Activated CD4-positive, alpha-beta T cell treated with anti-CD3 and anti-CD28 coated beads for 36 hours (primary cell): ENCODE measurements at regions of chr1 and their contacts with region 1.

Region 1: DNA sequence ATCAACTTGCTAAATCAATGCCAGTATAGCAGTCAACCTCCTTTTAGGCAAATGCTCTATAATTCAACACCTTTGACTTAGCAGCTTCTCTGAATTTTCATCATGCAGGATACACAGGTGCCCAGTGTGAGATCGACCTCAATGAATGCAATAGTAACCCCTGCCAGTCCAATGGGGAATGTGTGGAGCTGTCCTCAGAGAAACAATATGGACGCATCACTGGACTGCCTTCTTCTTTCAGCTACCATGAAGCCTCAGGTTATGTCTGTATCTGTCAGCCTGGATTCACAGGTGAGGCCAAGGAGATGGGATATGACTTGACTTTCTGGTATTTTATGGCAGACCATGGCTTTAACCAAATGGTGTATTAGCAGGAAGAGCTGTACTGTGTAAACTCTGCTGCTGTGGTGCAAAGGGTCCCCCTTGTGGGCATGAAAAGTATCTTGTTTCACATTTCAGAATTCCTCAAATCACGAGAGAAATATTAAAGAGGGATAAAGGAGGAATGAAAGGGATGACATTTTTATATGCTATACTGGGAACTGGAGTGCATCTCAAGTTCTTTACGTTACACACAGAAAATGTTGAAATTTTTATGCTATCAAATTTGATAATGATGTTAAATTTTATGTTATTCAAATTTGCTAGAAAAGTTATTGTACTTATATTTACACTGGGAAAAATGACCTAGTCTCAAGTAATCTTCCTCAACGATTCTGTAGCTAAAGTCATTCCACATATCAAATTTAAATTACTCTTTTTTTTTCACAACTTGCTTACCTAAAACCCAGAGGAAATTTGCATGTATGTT is 88.9 kb downstream of the CRB1 start:
- DNase-seq: peak; percentile 45
- ATAC-seq: peak; percentile 64
- H3K4me3 Mint-ChIP-seq: no peak overlapping the region
- H3K27ac Mint-ChIP-seq: no peak overlapping the region
- H3K4me1 Mint-ChIP-seq: no peaks in the 10 kb centered on the region
- H3K27me3 Mint-ChIP-seq: no peaks in the 10 kb centered on the region

Region 2: GRCh38 chr1:196723322-196724185 is 633.4 kb before region 1 on chr1:
- CTCF ChIA-PET with region 1: no interaction called
- POLR2A ChIA-PET with region 1: no interaction called
- intact Hi-C with region 1: loop called in 1 of 2 experiments (anchors 1 kb)
- DNase-seq: peak; percentile 70
- ATAC-seq: peak; percentile 83
- H3K4me3 Mint-ChIP-seq: no peak overlapping the region
- H3K27ac Mint-ChIP-seq: no peak overlapping the region
- H3K4me1 Mint-ChIP-seq: no peaks in the 10 kb centered on the region
- H3K27me3 Mint-ChIP-seq: no peaks in the 10 kb centered on the region

Region 3: GRCh38 chr1:196738730-196739129 is 618.2 kb before region 1 on chr1:
- CTCF ChIA-PET with region 1: no interaction called
- POLR2A ChIA-PET with region 1: no interaction called
- intact Hi-C with region 1: loop called in 1 of 2 experiments (anchors 5 kb)
- DNase-seq: no peak
- ATAC-seq: no peak
- H3K4me3 Mint-ChIP-seq: no peak overlapping the region
- H3K27ac Mint-ChIP-seq: no peak overlapping the region
- H3K4me1 Mint-ChIP-seq: no peaks in the 10 kb centered on the region
- H3K27me3 Mint-ChIP-seq: no peaks in the 10 kb centered on the region

Region 4: GRCh38 chr1:197180252-197180878 is 176.6 kb before region 1 on chr1:
- CTCF ChIA-PET with region 1: interaction called, 48 read pairs
- POLR2A ChIA-PET with region 1: interaction called, 3 read pairs
- intact Hi-C with region 1: loop called (anchors 1 kb)
- DNase-seq: no peak
- ATAC-seq: peak; percentile 19
- H3K4me3 Mint-ChIP-seq: no peak overlapping the region
- H3K27ac Mint-ChIP-seq: no peak overlapping the region
- H3K4me1 Mint-ChIP-seq: peaks cover 3% of the 10 kb centered on the region
- H3K27me3 Mint-ChIP-seq: no peaks in the 10 kb centered on the region

Region 5: DNA sequence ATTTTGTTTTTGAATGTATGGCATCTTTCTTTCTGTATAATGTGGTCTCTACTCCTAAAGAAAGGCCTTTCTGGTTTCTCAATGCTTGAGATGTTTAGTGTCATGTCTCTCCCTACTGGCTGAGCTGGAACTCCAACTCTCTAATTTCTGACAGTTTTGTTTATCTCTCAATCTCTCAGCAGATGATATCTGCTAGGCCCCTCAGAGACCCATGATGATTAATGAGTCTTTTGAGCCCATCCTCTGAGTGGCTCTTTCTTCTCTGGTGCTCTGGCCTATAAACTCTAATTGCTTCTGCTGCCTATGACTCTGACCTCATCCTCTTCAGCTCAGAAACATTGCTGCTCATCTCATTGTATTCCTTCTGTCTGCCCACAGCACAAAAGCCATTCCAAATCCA is 42.2 kb before region 1 on chr1:
- CTCF ChIA-PET with region 1: no interaction called
- POLR2A ChIA-PET with region 1: no interaction called
- intact Hi-C with region 1: no loop called
- DNase-seq: no peak
- ATAC-seq: no peak
- H3K4me3 Mint-ChIP-seq: no peak overlapping the region
- H3K27ac Mint-ChIP-seq: no peak overlapping the region
- H3K4me1 Mint-ChIP-seq: no peaks in the 10 kb centered on the region
- H3K27me3 Mint-ChIP-seq: no peaks in the 10 kb centered on the region

Region 6: GRCh38 chr1:197327776-197328364 is 29.1 kb before region 1 on chr1:
- CTCF ChIA-PET with region 1: interaction called, 4 read pairs
- POLR2A ChIA-PET with region 1: no interaction called
- intact Hi-C with region 1: loop called in 1 of 2 experiments (anchors 1 kb)
- DNase-seq: no peak
- ATAC-seq: no peak
- H3K4me3 Mint-ChIP-seq: no peak overlapping the region
- H3K27ac Mint-ChIP-seq: no peak overlapping the region
- H3K4me1 Mint-ChIP-seq: no peaks in the 10 kb centered on the region
- H3K27me3 Mint-ChIP-seq: no peaks in the 10 kb centered on the region

Region 7: DNA sequence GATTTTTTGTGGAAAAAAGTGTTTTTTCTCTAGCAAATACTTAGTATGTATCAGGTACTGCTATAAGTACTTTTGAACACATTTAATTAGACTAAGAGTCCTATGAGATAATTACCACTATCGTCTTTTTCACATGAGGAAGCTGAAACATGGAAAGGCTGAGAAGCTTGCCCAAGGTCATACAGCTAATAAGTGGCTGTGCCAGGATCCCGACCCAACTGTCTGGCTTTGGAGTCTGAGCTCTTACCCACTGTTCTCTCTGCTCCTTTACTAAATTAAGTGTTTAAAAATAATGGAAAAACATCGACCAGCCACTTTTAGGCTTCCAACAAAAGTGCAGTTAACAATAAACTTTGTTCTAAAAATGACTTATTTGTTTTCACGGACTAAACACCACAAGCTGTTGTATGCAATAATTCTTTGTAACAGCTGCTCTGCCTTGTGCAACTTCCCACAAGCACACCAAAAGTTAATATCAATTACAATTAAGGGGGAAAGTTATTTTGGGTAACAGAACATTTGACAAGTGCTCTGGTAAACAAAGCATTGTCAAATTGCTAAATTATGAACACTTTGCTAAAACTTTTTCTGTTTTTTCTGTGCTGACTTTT is 13.2 kb before region 1 on chr1:
- CTCF ChIA-PET with region 1: interaction called, 21 read pairs
- POLR2A ChIA-PET with region 1: no interaction called
- intact Hi-C with region 1: no loop called
- DNase-seq: no peak
- ATAC-seq: no peak
- H3K4me3 Mint-ChIP-seq: no peak overlapping the region
- H3K27ac Mint-ChIP-seq: no peak overlapping the region
- H3K4me1 Mint-ChIP-seq: peaks cover 2% of the 10 kb centered on the region
- H3K27me3 Mint-ChIP-seq: peaks cover 4% of the 10 kb centered on the region